ENCODE measurements at regions of chr19 and their contacts with region 1.

Region 1: GRCh38 chr19:18401580-18402112 is 4.2 kb upstream of the LRRC25 start:
- DNase-seq: peak in 2 of 3 donors; percentile 83 to 84
- ATAC-seq: peak; percentile 69 to 81
- H3K4me3 ChIP-seq: no peak overlapping the region
- H3K27ac ChIP-seq: no peak overlapping the region
- H3K4me1 ChIP-seq: no peaks in the 10 kb centered on the region
- H3K27me3 ChIP-seq: no peaks in the 10 kb centered on the region

Region 2: DNA sequence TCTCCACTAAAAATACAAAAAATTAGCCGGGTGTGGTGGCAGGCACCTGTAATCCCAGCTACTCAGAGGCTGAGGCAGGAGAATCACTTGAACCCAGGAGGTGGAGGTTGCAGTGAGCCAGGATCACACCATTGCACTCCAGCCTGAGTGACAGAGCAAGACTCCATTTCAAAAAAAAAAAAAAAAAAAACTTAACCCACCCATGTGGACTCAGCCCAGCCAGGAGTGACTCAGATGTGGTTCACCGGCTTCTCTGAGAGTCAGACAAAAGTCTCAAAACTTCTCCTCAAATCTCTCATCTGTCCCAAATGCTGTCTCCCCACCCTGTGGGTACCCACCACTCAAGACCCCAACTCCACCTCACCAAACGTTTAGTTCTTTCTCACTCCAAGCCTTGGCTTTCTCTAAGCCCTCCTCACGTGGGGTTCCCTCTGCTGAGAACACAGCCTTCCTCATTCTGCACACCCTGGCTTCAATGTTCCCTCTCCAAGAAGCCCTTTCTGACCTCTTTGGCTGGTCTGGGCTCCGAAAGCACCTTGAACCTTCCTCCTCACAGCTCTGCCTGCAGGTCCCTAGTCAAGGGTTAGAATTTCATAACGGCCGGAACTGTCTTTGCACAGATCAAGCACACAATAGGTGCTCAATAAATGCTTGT is 186.7 kb before region 1 on chr19:
- intact Hi-C with region 1: loop called in 1 of 4 experiments (anchors 10 kb)
- DNase-seq: no peak
- ATAC-seq: no peak
- H3K4me3 ChIP-seq: no peak overlapping the region
- H3K27ac ChIP-seq: no peak overlapping the region
- H3K4me1 ChIP-seq: no peaks in the 10 kb centered on the region
- H3K27me3 ChIP-seq: no peaks in the 10 kb centered on the region

Region 3: GRCh38 chr19:18259893-18260292 is 141.8 kb before region 1 on chr19:
- intact Hi-C with region 1: loop called in 1 of 4 experiments (anchors 10 kb)
- DNase-seq: no peak
- ATAC-seq: no peak
- H3K4me3 ChIP-seq: no peak overlapping the region
- H3K27ac ChIP-seq: no peak overlapping the region
- H3K4me1 ChIP-seq: no peaks in the 10 kb centered on the region
- H3K27me3 ChIP-seq: no peaks in the 10 kb centered on the region

Region 4: GRCh38 chr19:18281082-18282020 is 120.3 kb before region 1 on chr19 and contains the start of gene JUND:
- intact Hi-C with region 1: loop called in 1 of 4 experiments (anchors 10 kb)
- DNase-seq: peak; percentile 99 to 100 (median 99)
- ATAC-seq: peak; percentile 82 to 87
- H3K4me3 ChIP-seq: peak within 1 kb of the TSS; percentile 84
- H3K27ac ChIP-seq: peak within 1 kb of the TSS; percentile 99
- H3K4me1 ChIP-seq: peaks cover 13% of the 10 kb centered on the region
- H3K27me3 ChIP-seq: no peaks in the 10 kb centered on the region
- total RNA-seq, gene JUND: 117 to 229 (median 122) TPM

Region 5: DNA sequence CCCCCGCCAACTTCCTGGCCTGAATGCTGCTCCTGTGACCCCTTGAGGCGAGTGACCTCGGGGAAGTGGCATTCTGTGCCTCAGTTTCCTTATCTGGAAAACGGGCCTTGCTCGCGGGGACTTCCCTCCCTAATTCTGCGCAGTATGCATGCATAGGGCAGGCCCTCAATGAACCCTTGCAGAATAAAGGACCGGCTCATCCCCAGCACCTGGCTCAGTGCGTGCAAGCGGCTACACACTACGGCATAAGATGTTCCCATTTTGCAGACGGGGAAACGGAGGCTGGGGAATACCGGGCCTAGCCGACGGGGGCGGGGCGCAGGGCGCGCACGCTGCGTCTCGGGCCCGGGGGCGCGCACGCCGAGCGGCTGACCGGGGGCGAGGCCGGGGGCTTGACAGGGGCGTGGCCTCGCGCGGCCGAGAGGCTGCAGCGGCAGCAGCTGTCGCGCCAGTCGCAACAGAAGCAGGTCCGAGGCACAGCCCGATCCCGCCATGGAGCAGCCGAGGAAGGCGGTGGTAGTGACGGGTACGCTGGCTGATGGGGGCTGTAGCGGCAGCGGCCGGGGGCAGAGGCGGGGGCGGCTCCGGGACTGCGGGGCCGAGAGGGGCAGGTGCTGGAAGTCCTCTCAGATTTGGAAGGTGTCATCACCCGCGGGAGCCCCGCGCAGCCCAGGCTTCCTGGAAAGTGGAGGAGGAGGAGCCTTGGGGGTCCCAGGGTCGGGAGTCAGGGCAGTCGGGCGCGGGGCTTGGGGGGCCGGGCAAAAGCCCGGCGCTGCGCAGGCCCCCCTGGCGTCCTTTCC is 61.3 kb before region 1 on chr19 and contains the start of gene PGPEP1:
- intact Hi-C with region 1: loop called in 1 of 4 experiments (anchors 10 kb)
- DNase-seq: peak; percentile 76 to 94 (median 93)
- ATAC-seq: peak; percentile 89 to 91
- H3K4me3 ChIP-seq: peak within 1 kb of the TSS; percentile 69
- H3K27ac ChIP-seq: peak within 1 kb of the TSS; percentile 10
- H3K4me1 ChIP-seq: no peaks in the 10 kb centered on the region
- H3K27me3 ChIP-seq: no peaks in the 10 kb centered on the region
- total RNA-seq, gene PGPEP1: 31.3 to 42.0 (median 35.0) TPM

Region 6: GRCh38 chr19:18349524-18350128 is 52.0 kb before region 1 on chr19:
- intact Hi-C with region 1: loop called in 2 of 4 experiments (anchors 5 to 10 kb)
- DNase-seq: peak; percentile 34 to 76 (median 69)
- ATAC-seq: peak in 1 of 2 donors; percentile 66
- H3K4me3 ChIP-seq: no peak overlapping the region
- H3K27ac ChIP-seq: no peak overlapping the region
- H3K4me1 ChIP-seq: no peaks in the 10 kb centered on the region
- H3K27me3 ChIP-seq: no peaks in the 10 kb centered on the region

Region 7: GRCh38 chr19:18436671-18437490 is 35.2 kb after region 1 on chr19:
- intact Hi-C with region 1: no loop called
- DNase-seq: peak; percentile 87 to 95 (median 93)
- ATAC-seq: peak; percentile 47 to 56
- H3K4me3 ChIP-seq: peak overlapping the region; percentile 58
- H3K27ac ChIP-seq: no peak overlapping the region
- H3K4me1 ChIP-seq: peaks cover 6% of the 10 kb centered on the region
- H3K27me3 ChIP-seq: no peaks in the 10 kb centered on the region

Measured in right cardiac atrium (tissue), 5 donors.